ENCODE measurements at regions of chr5 and their contacts with region 1.

Region 1: GRCh38 chr5:181037365-181037861 is 2.7 kb upstream of the BTNL9 start:
- DNase-seq: peak in 1 of 2 experiments; percentile 48
- H3K4me3 ChIP-seq: no peak overlapping the region
- H3K27ac ChIP-seq: no peak overlapping the region
- H3K4me1 ChIP-seq: peaks cover 0 to 13% (median 8%) of the 10 kb centered on the region in 4 experiments; a peak in 5 of 7 replicates
- H3K27me3 ChIP-seq: no peaks in the 10 kb centered on the region; a peak in 1 of 7 replicates
- CTCF ChIP-seq: peak in 1 of 3 experiments; percentile 6; a peak in 1 of 4 replicates
- EP300 ChIP-seq: no peak
- POLR2A ChIP-seq: no peak
- RAD21 ChIP-seq: peak in 1 of 2 experiments; percentile 16; a peak in 1 of 4 replicates

Region 2: GRCh38 chr5:180860887-180861822 is 176.3 kb before region 1 on chr5 and contains the start of gene ZFP62:
- CTCF ChIA-PET with region 1: no interaction called
- POLR2A ChIA-PET with region 1: interaction called, 10 read pairs
- DNase-seq: peak; percentile 88 to 95
- H3K4me3 ChIP-seq: peak within 1 kb of the TSS; percentile 69 to 98 (median 88)
- H3K27ac ChIP-seq: peak within 1 kb of the TSS; percentile 80; the same call in 1 of the 2 replicates
- H3K4me1 ChIP-seq: peaks cover 0 to 8% (median 0%) of the 10 kb centered on the region in 4 experiments; a peak in 2 of 7 replicates
- H3K27me3 ChIP-seq: no peaks in the 10 kb centered on the region
- CTCF ChIP-seq: no peak
- EP300 ChIP-seq: no peak; a peak in 1 of 3 replicates
- POLR2A ChIP-seq: peak; percentile 35 to 59; a peak in 2 of 3 replicates
- RAD21 ChIP-seq: no peak
- total RNA-seq, gene ZFP62: 34.8 and 38.5 TPM in 2 replicates

Measured in H1 (cell line).